ENCODE measurements at regions of chr17 and their contacts with region 1.

Region 1: DNA sequence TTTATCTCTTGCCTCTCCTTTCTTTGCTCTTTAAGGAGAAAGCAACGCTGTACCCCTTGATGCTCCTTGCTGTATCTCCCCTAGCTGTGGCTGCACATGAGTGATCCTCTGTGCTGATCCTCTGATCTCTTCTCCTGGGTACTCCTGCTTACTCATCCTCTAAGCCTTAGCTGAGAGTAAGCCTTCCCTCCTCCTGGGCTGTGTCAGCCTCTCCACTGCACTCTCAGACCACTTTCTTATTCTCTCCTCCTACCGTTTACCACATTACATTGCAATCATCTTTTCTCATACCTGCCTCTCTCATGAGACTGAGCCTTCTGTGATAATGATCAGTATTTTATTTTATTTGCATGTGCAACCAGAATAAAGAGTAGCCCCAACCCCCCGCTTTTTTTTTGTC is 25.2 kb downstream of the SOX9 start:
- DNase-seq: no peak
- ATAC-seq: no peak

Region 2: DNA sequence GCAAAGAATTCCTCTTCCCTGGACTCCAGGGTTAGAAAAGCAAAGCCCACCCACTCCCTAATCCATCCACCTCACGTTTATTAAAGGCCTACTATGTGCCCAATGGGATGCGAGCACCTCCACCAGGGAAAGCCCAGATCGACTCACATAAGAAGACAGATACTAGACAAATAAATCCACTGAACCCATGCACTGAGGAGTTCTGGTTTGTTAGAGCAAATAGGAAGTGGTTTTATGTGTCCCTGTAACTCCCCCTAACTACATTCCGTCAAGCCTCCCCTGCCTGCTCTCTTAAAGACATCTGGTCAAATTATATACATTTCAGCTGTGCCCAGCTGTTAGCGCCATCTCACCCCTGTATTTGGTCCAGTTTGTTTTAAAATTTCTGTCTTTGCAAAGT is 1839.0 kb after region 1 on chr17:
- intact Hi-C with region 1: loop called (anchors 10 kb)
- DNase-seq: no peak
- ATAC-seq: no peak